ENCODE measurements at regions of chr18 and their contacts with region 1.

Region 1: DNA sequence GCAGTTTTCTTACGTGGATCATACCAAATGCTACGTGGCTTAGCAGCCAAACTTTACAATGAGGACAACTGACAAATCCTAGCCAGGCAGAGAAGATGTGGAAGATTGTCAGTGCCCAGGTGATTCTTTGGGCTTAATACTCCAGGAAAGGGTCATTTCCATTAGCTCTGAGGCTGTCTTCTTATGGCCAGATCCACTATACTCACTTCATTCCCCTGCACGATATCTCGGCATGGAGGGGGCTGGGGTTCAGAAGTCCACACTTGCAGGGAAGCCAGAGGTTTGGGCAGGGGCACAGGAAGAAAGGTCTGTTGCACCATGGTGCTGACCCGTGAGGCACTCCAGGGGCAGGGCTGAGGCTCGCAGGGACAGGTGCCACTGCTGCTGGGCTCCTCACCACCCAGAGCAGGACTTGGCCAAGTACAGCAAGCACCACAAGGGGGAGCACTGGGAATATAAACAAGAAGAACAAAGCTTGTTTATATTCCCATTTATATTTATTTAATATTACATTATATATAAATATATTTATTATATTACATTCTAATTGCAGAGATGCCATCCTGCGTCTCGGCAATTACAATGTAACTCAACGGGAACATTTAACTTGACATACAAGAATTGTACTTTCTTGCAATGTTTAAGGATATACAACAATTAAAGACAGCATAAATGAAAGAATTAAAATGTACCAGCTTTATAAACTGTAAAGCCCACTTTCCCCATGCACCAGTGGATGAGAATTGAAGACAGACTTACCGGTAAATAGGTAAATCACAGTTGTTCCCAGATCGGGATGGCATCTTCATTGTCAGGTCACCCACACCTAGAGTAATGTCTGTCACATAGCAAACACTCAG is 27.2 kb downstream of the CLUL1 start:
- DNase-seq: peak; percentile 77 to 85 (median 77)
- H3K4me3 ChIP-seq: no peak overlapping the region
- H3K27ac ChIP-seq: no peak overlapping the region
- H3K4me1 ChIP-seq: peaks cover 0 to 2% (median 0%) of the 10 kb centered on the region in 4 experiments
- H3K27me3 ChIP-seq: no peaks in the 10 kb centered on the region

Region 2: GRCh38 chr18:644395-645004 is 20.5 kb after region 1 on chr18:
- CTCF ChIA-PET with region 1: interaction called, 11 read pairs
- POLR2A ChIA-PET with region 1: no interaction called
- DNase-seq: peak in 2 of 3 donors; percentile 9 to 19
- H3K4me3 ChIP-seq: no peak overlapping the region
- H3K27ac ChIP-seq: no peak overlapping the region
- H3K4me1 ChIP-seq: no peaks in the 10 kb centered on the region
- H3K27me3 ChIP-seq: no peaks in the 10 kb centered on the region

Region 3: DNA sequence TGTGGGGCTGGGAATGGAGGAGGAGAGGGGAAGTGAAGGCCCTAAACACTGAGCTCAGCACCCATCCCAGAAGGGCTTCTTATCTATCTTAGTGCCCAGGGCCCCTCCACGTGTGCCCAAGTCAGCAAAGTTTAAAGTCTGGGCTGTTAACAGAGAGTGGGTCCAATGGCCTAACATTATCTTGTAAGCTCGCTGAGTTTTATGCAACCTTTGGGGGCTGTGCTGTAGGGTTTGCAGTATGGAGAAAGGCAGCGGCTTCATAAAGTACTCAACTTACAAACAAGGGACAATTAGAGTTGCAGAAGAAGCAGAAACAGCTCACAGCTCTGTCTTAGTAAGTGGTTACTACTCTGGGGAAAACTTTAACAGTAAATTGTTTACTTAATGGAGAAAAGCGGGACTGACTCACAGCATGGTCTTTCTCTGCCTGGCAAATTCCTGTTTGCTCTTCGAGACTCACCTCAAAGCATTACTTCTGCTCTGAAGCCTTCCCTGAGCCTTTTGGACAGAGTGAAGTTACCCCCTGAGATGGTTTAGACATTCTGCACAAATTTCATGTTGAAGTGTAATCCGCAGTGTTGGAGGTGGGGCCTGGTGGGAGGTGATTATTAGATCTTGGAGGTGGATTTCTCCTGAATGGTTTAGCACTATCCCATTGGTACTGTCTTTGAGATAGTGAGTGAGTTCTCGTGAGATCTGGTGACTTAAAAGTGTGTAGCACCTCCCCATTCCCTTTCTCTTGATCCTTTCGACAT is 79.4 kb after region 1 on chr18:
- CTCF ChIA-PET with region 1: interaction called, 12 read pairs
- POLR2A ChIA-PET with region 1: interaction called, 3 read pairs
- DNase-seq: no peak
- H3K4me3 ChIP-seq: no peak overlapping the region
- H3K27ac ChIP-seq: peak overlapping the region; percentile 3 to 47
- H3K4me1 ChIP-seq: peaks cover 5 to 13% (median 11%) of the 10 kb centered on the region in 4 experiments
- H3K27me3 ChIP-seq: no peaks in the 10 kb centered on the region

Region 4: DNA sequence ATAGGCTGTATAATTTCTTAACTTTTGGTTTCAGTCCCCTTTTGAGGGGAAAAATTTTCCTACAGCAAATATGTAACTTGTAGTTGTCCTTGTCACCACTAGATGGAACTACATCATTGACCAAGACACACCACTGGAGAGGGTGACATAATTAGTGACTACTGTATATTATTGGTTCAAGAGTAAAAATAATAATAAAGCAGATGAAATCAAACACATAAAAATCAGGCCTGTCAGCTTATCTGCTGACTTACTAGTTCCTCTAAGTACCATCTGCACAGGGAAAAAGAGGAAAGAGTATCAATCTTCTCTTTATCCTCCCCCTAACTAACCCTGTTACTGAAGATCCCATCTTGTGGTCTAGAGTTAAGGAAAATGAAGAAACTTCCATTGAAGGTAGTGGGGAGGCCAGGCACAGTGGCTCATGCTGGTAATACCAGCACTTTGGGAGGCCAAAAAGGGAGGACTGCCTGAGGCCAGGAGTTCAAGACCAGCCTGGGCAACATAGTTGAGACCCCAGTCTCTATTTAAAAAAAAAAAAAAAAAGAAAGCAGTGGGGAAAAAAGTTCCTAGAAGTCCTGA is 118.0 kb after region 1 on chr18:
- CTCF ChIA-PET with region 1: interaction called, 11 read pairs
- POLR2A ChIA-PET with region 1: no interaction called
- DNase-seq: peak; percentile 59 to 82 (median 79)
- H3K4me3 ChIP-seq: no peak overlapping the region
- H3K27ac ChIP-seq: no peak overlapping the region
- H3K4me1 ChIP-seq: no peaks in the 10 kb centered on the region
- H3K27me3 ChIP-seq: no peaks in the 10 kb centered on the region

Region 5: GRCh38 chr18:839224-840022 is 215.4 kb after region 1 on chr18:
- CTCF ChIA-PET with region 1: interaction called, 47 read pairs
- POLR2A ChIA-PET with region 1: no interaction called
- DNase-seq: peak; percentile 81 to 90 (median 86)
- H3K4me3 ChIP-seq: peak overlapping the region in 1 of 7 experiments; percentile 48
- H3K27ac ChIP-seq: peak overlapping the region in 1 of 2 experiments; percentile 39
- H3K4me1 ChIP-seq: peaks cover 0 to 3% (median 0%) of the 10 kb centered on the region in 4 experiments
- H3K27me3 ChIP-seq: no peaks in the 10 kb centered on the region

Region 6: DNA sequence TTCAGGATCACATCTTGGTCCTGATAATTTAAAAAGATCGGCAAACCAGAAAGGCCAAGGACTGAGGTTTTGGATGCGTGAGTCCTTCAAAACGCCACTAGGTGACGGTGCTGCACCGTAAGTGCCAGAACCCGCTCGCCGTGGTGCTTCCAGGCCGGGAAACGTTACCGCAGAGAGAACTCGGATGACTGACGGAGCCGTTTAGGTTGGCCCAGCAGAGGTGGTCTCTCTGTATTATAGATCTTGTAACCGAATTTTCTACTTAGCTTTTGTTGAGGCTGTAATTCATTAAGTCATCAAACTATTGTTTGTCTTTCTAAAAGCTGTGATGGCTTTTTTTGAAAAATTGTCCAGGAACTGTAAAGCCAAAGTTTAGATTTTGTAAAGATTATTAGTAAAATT is 240.9 kb after region 1 on chr18:
- CTCF ChIA-PET with region 1: no interaction called
- POLR2A ChIA-PET with region 1: no interaction called
- DNase-seq: peak; percentile 82 to 90 (median 87)
- H3K4me3 ChIP-seq: no peak overlapping the region
- H3K27ac ChIP-seq: no peak overlapping the region
- H3K4me1 ChIP-seq: peaks cover 0 to 6% (median 2%) of the 10 kb centered on the region in 4 experiments
- H3K27me3 ChIP-seq: peaks cover 0 to 2% (median 2%) of the 10 kb centered on the region in 5 experiments